ENCODE measurements at regions of chr10 and their contacts with region 1.

Region 1: GRCh38 chr10:63798599-63799498 is 277.6 kb downstream of the REEP3 start:
- DNase-seq: peak; percentile 81 to 89
- ATAC-seq: peak; percentile 90
- H3K4me3 ChIP-seq: peak overlapping the region in 1 of 2 donors; percentile 19
- H3K27ac ChIP-seq: peak overlapping the region; percentile 43 to 71
- H3K4me1 ChIP-seq: peaks cover 3 to 6% of the 10 kb centered on the region in 2 donors
- H3K27me3 ChIP-seq: no peaks in the 10 kb centered on the region

Region 2: DNA sequence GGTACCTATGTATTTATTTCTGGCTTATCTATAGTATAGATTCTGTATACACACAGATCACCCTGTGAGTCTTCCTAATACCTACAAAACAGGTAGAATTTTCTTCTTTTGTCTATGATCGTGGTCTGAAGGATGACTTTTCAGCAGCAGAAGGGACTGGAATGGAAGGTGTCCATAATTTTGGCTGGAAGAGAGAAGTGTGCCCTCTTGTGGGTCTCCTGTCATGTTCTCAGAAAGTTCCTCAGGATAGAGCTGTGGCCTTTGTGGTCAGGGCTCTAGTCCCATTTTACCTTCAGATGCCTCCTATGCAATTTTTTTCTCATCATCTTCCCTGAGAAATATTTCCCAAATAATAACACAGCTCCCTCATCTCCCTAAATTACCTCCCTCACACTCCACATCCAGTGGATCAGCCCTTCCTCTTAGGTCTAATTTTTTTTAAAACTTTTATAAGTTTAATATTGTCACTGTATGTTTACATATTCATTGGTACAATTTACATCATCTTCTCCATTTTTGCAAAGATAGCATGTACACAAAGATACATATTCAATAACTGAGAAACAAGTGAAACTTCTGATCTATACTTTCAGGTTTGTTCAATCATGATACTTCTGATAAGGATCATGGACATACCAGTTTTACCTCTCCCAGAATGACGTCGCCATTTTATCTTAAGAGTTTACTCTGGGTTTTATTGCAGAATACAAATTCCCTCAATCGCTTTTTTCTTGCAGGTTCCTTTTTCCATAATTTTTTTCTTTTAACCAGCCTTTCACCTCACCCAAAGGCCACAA is 165.0 kb before region 1 on chr10:
- intact Hi-C with region 1: no loop called
- DNase-seq: no peak
- ATAC-seq: no peak
- H3K4me3 ChIP-seq: no peak overlapping the region
- H3K27ac ChIP-seq: no peak overlapping the region
- H3K4me1 ChIP-seq: no peaks in the 10 kb centered on the region
- H3K27me3 ChIP-seq: no peaks in the 10 kb centered on the region

Region 3: DNA sequence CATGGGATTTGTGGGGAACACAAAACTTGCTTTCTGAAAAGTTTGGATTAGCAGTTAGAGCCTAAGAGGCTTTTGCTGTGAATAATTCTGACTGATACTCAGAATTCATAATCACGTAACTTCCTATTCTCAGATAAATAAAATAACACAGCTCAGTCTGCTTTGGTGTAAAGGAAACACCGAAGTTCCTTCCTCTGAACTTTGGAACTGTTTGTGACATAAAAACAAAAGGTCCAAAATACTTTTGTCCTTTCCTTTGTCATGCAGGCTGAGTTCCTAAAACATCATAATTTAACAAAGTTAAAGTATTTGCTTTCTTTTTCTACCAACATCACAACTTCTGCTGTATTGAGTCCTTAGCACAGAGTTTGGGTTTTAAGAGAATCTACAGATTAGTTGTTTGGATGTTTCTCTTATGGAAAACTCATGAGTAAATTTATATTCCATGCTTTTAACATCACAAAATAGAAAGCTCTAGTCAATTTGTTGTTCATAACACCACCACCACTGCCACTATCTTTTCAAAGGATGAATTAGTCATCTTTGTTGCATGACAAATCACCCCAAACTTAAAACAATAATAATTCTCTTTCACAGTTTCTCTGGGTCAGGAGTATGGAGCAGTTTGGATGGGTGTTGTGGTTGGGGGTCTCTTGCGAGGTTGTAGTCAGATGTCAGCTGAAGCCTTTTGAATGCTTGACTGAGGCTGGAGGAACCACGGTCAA is 154.3 kb before region 1 on chr10:
- intact Hi-C with region 1: no loop called
- DNase-seq: no peak
- ATAC-seq: no peak
- H3K4me3 ChIP-seq: no peak overlapping the region
- H3K27ac ChIP-seq: no peak overlapping the region
- H3K4me1 ChIP-seq: no peaks in the 10 kb centered on the region
- H3K27me3 ChIP-seq: no peaks in the 10 kb centered on the region

Region 4: GRCh38 chr10:63707254-63707910 is 91.5 kb before region 1 on chr10:
- intact Hi-C with region 1: loop called in 1 of 2 experiments (anchors 5 kb)
- DNase-seq: no peak
- ATAC-seq: peak; percentile 87
- H3K4me3 ChIP-seq: no peak overlapping the region
- H3K27ac ChIP-seq: peak overlapping the region in 1 of 2 donors; percentile 46
- H3K4me1 ChIP-seq: peaks cover 2 to 8% of the 10 kb centered on the region in 2 donors
- H3K27me3 ChIP-seq: no peaks in the 10 kb centered on the region

Region 5: GRCh38 chr10:64196638-64197315 is 397.9 kb after region 1 on chr10:
- intact Hi-C with region 1: no loop called
- DNase-seq: peak in 1 of 2 donors; percentile 66
- ATAC-seq: no peak
- H3K4me3 ChIP-seq: no peak overlapping the region
- H3K27ac ChIP-seq: no peak overlapping the region
- H3K4me1 ChIP-seq: no peaks in the 10 kb centered on the region
- H3K27me3 ChIP-seq: no peaks in the 10 kb centered on the region